Caco-2 (cell line): ENCODE measurements at regions of chr2 and their contacts with region 1.

Region 1: GRCh38 chr2:108583903-108584520 is 49.7 kb downstream of the LIMS1 start:
- DNase-seq: peak; percentile 71 to 80
- H3K4me3 ChIP-seq: no peak overlapping the region
- H3K4me3 Mint-ChIP-seq: no peak overlapping the region
- H3K27ac Mint-ChIP-seq: no peak overlapping the region
- H3K4me1 ChIP-seq: peaks cover 12% of the 10 kb centered on the region; the same call in 1 of the 2 replicates
- H3K4me1 Mint-ChIP-seq: peaks cover 33% of the 10 kb centered on the region
- H3K27me3 ChIP-seq: no peaks in the 10 kb centered on the region
- H3K27me3 Mint-ChIP-seq: no peaks in the 10 kb centered on the region
- CTCF ChIP-seq: peak; percentile 82 to 83

Region 2: GRCh38 chr2:108351889-108352288 is 232.1 kb before region 1 on chr2:
- CTCF ChIA-PET with region 1: interaction called, 3 read pairs
- POLR2A ChIA-PET with region 1: interaction called, 3 read pairs
- intact Hi-C with region 1: loop called (anchors 1 kb)
- DNase-seq: no peak
- H3K4me3 ChIP-seq: no peak overlapping the region
- H3K4me3 Mint-ChIP-seq: no peak overlapping the region
- H3K27ac Mint-ChIP-seq: no peak overlapping the region
- H3K4me1 ChIP-seq: no peaks in the 10 kb centered on the region
- H3K4me1 Mint-ChIP-seq: no peaks in the 10 kb centered on the region
- H3K27me3 ChIP-seq: no peaks in the 10 kb centered on the region
- H3K27me3 Mint-ChIP-seq: no peaks in the 10 kb centered on the region
- CTCF ChIP-seq: no peak

Region 3: DNA sequence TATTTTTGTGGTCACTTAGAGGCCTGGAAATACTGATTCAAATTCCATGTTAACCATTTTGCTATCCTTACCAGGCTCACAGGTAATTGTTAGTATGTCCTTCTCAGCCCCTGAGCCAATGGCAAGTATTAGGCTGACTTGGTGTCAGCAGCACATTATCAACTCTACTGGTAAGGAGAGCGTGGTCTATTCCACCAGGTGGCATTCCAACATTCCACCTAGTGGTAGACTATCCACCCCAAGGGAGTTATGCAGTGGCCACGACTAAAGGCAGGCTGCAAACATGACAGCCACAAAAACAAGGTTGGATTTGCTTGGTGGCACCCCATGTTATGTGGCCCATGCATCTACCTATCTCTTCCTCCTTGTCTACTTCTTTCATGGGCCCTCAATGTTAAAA is 166.8 kb before region 1 on chr2:
- CTCF ChIA-PET with region 1: no interaction called
- POLR2A ChIA-PET with region 1: no interaction called
- intact Hi-C with region 1: loop called (anchors 1 kb)
- DNase-seq: peak; percentile 57 to 61
- H3K4me3 ChIP-seq: no peak overlapping the region
- H3K4me3 Mint-ChIP-seq: no peak overlapping the region
- H3K27ac Mint-ChIP-seq: no peak overlapping the region
- H3K4me1 ChIP-seq: no peaks in the 10 kb centered on the region
- H3K4me1 Mint-ChIP-seq: peaks cover 6% of the 10 kb centered on the region
- H3K27me3 ChIP-seq: no peaks in the 10 kb centered on the region
- H3K27me3 Mint-ChIP-seq: no peaks in the 10 kb centered on the region
- CTCF ChIP-seq: peak; percentile 61 to 70

Region 4: GRCh38 chr2:108492364-108492763 is 91.6 kb before region 1 on chr2:
- CTCF ChIA-PET with region 1: no interaction called
- POLR2A ChIA-PET with region 1: no interaction called
- intact Hi-C with region 1: loop called (anchors 1 kb)
- DNase-seq: peak in 1 of 2 experiments; percentile 30
- H3K4me3 ChIP-seq: no peak overlapping the region
- H3K4me3 Mint-ChIP-seq: peak overlapping the region; percentile 27
- H3K27ac Mint-ChIP-seq: peak overlapping the region; percentile 82
- H3K4me1 ChIP-seq: peaks cover 19% of the 10 kb centered on the region
- H3K4me1 Mint-ChIP-seq: peaks cover 17% of the 10 kb centered on the region
- H3K27me3 ChIP-seq: no peaks in the 10 kb centered on the region
- H3K27me3 Mint-ChIP-seq: no peaks in the 10 kb centered on the region
- CTCF ChIP-seq: no peak